ENCODE measurements at regions of chr5 and their contacts with region 1.

Region 1: DNA sequence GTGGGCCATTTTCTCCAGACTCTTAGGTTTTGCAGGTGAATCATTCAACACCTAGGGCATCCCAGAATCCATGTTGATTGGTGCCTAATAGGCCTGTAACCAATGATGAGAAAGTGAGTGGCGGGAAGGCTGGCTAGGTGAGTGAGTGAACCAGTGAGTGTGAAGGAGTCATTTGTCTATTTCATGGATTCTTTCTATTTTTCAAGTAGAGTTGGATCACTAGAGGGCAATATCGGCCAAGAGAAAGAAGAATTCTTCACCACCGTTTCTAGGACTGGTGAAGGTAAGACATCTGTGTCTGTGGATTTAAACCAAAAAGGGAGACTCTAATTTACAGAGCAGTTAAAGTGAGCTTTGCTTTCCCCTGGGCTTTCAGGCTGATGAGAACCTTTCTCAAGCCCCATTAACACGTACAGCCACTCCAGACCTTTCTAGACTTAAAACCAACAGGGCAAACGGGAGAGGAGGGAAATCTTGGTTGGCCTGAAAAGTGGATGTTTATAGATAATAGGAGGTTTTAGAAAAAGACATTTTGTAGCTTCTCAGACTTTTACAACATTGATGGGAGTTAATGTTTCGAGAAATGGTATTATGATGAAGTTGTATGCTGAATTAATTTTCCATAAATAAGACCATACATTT is 114.3 kb upstream of the IL12B start:
- DNase-seq: peak; percentile 24
- H3K4me3 Mint-ChIP-seq: no peak overlapping the region
- H3K27ac Mint-ChIP-seq: no peak overlapping the region
- H3K4me1 Mint-ChIP-seq: peaks cover 21% of the 10 kb centered on the region
- H3K27me3 Mint-ChIP-seq: peaks cover 1% of the 10 kb centered on the region
- CTCF ChIP-seq: no peak

Region 2: GRCh38 chr5:159198063-159199036 is 246.2 kb before region 1 on chr5:
- CTCF ChIA-PET with region 1: no interaction called
- intact Hi-C with region 1: no loop called
- DNase-seq: no peak
- H3K4me3 Mint-ChIP-seq: no peak overlapping the region
- H3K27ac Mint-ChIP-seq: peak overlapping the region; percentile 20
- H3K4me1 Mint-ChIP-seq: peaks cover 44% of the 10 kb centered on the region
- H3K27me3 Mint-ChIP-seq: no peaks in the 10 kb centered on the region
- CTCF ChIP-seq: no peak

Region 3: GRCh38 chr5:159286420-159287035 is 158.0 kb before region 1 on chr5:
- CTCF ChIA-PET with region 1: interaction called, 8 read pairs
- intact Hi-C with region 1: loop called (anchors 2 kb)
- DNase-seq: peak; percentile 11
- H3K4me3 Mint-ChIP-seq: no peak overlapping the region
- H3K27ac Mint-ChIP-seq: no peak overlapping the region
- H3K4me1 Mint-ChIP-seq: no peaks in the 10 kb centered on the region
- H3K27me3 Mint-ChIP-seq: no peaks in the 10 kb centered on the region
- CTCF ChIP-seq: no peak

Region 4: DNA sequence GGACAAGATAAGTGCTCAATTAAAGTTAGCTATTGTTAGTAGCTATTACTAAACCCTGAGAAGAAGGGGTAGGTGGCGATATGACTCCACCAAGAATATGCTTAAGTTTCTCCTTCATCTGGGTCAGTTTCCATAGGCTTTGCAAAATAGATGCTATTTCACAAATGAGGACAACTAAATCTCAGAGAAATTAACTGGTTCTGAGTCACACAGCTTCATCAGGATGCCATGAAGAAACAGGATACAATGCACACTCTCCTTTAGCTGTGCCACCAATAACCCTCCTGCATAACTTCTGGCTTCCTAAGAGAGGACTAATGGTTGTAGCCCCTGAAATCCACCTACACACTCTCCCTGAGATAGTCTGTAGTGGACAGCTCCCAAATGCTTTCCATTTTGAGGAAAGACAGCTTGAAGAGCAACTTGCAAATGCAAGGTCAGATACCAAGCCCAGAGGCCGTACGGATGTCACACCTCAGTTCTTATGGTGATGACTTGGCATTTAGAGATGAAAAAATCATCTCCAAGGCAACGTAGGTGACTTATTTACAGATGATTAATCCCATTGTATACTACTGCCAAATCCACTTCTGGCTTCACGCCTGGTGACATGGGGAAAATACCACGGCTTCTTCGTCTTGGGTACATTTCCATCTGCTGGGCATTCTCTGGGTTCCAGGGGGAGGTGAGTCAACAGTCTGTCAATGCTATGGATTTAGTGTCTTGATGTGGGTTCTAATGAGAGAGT is 137.1 kb after region 1 on chr5:
- CTCF ChIA-PET with region 1: interaction called, 3 read pairs
- intact Hi-C with region 1: loop called (anchors 2 kb)
- DNase-seq: peak; percentile 85
- H3K4me3 Mint-ChIP-seq: no peak overlapping the region
- H3K27ac Mint-ChIP-seq: peak overlapping the region; percentile 79
- H3K4me1 Mint-ChIP-seq: peaks cover 37% of the 10 kb centered on the region
- H3K27me3 Mint-ChIP-seq: no peaks in the 10 kb centered on the region
- CTCF ChIP-seq: no peak

Measured in Calu3 (cell line).